Left cardiac atrium (tissue), 4 donors: ENCODE measurements at regions of chrX and their contacts with region 1.

Region 1: DNA sequence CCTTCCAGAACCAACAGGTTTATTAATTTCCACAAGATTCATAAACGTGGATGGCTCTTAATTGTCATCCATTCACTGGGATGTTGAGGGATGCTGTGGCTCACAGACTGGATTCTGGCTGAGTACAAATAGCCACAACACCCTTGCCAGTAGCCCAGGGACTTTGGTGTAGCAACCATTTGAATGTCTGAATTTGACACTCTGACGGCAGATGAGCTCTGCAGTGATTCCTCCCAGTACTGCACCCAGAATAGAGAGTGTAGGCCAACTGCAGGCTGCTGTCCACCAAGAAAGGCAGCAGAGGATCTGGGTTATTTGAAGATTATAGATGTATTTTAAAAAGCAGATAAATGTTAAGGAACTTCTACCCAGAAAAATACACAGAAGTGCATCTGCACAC is 15.6 kb upstream of the MAMLD1 start:
- DNase-seq: no peak
- ATAC-seq: no peak

Region 2: GRCh38 chrX:150288210-150288609 is 59.3 kb before region 1 on chrX:
- intact Hi-C with region 1: loop called in 1 of 2 experiments (anchors 2 kb)
- DNase-seq: no peak
- ATAC-seq: no peak